SK-N-SH (cell line): ENCODE measurements at regions of chr13 and their contacts with region 1.

Region 1: DNA sequence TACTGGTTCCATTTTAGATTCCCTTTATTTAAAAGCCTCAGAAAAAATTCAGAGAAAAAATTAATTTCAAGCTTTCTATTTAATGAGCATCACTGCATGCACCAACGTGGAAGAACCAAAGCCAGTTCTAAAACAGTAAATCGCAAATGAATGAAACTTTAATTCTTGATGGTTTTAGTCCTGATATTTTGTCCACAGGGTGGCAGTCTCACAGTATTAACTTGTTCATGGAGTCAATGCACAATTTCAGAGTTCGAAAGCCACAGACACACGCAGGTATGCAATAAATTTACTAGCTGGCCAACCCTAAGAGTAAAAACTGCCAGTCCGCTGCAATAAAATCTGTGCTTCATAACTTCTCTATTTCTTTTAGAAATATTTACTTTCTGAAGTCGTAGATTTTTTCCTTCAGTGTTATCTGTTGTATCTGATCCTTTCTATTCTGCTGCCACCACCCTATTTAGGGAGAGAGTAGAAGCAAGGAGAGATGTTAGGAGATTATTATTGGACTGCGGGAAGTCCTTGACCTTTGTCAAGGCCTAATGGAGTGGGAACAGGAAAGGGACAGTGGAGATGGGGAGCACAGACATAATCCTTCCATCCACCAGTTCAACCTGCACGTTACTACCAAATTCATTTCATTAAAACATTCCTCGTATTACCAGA is 7.0 kb upstream of the WBP4 start:
- DNase-seq: peak; percentile 41
- H3K4me3 ChIP-seq: no peak overlapping the region; a peak in 1 of 4 replicates
- H3K27ac ChIP-seq: no peak overlapping the region
- H3K4me1 ChIP-seq: peaks cover 0 to 8% of the 10 kb centered on the region in 2 experiments; a peak in 2 of 4 replicates
- H3K27me3 ChIP-seq: no peaks in the 10 kb centered on the region
- CTCF ChIP-seq: peak; percentile 72
- EP300 ChIP-seq: no peak
- RAD21 ChIP-seq: peak; percentile 55

Region 2: DNA sequence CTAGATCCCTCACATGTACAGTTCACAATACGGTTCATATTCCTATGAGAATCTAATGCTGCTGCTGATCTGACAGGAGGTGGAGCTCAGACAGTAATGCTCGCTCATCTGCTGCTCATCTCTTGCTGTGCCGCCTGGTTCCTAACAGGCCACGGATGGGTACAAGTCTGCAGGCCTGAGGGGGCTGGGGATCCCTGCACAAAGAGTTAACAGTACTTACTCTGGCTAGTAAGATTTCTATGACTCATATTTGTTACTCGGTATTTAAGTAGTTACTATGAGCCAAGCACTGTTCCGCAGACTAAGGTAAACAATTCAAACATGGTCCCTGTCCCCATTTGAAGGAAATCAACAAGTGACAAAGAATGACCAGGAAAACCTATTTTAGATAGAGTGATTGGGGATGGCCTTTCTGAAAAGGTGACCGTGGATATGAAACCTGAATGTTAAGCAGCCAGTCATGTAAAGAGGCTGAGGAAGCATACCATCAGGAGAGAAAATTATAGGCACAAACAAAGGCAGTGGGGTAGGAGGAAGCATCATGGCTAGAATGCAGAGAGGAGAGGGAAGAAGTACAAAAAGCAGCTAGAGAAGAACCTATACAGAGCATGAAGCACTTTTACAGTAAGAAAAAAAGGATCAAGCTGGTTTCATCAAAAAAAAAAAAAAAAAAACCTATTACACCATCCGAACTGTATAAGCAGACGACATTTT is 13.6 kb before region 1 on chr13:
- CTCF ChIA-PET with region 1: interaction called, 19 read pairs
- POLR2A ChIA-PET with region 1: no interaction called
- DNase-seq: no peak
- H3K4me3 ChIP-seq: no peak overlapping the region
- H3K27ac ChIP-seq: no peak overlapping the region
- H3K4me1 ChIP-seq: no peaks in the 10 kb centered on the region
- H3K27me3 ChIP-seq: no peaks in the 10 kb centered on the region
- CTCF ChIP-seq: no peak
- EP300 ChIP-seq: no peak
- RAD21 ChIP-seq: no peak

Region 3: GRCh38 chr13:41193919-41194824 is 139.8 kb after region 1 on chr13 and contains the start of gene KBTBD7:
- CTCF ChIA-PET with region 1: no interaction called
- POLR2A ChIA-PET with region 1: no interaction called
- DNase-seq: peak; percentile 90
- H3K4me3 ChIP-seq: peak within 1 kb of the TSS; percentile 65 to 73
- H3K27ac ChIP-seq: peak within 1 kb of the TSS; percentile 82 to 93
- H3K4me1 ChIP-seq: peaks cover 0 to 18% of the 10 kb centered on the region in 2 experiments; a peak in 2 of 4 replicates
- H3K27me3 ChIP-seq: no peaks in the 10 kb centered on the region
- CTCF ChIP-seq: no peak
- EP300 ChIP-seq: peak in 1 of 2 experiments; percentile 42; a peak in 1 of 4 replicates
- RAD21 ChIP-seq: no peak
- polyA plus RNA-seq, gene KBTBD7: 1.3 and 1.7 TPM in 2 replicates